Right lobe of liver (tissue), 6 donors: ENCODE measurements at regions of chr4 and their contacts with region 1.

Region 1: GRCh38 chr4:37889849-37890800 is 759 bp upstream of the TBC1D1 start:
- DNase-seq: peak; percentile 79 to 90 (median 82)
- ATAC-seq: peak; percentile 87 to 94 (median 90)
- H3K4me3 ChIP-seq: peak overlapping the region; percentile 78 to 91 (median 85)
- H3K27ac ChIP-seq: peak overlapping the region; percentile 80 to 90 (median 84)
- H3K4me1 ChIP-seq: peaks cover 0 to 12% (median 0%) of the 10 kb centered on the region in 4 donors
- H3K27me3 ChIP-seq: no peaks in the 10 kb centered on the region
- CTCF ChIP-seq: peak; percentile 31 to 53 (median 42)
- POLR2A ChIP-seq: no peak

Region 2: GRCh38 chr4:37434469-37434868 is 455.7 kb before region 1 on chr4:
- intact Hi-C with region 1: no loop called
- DNase-seq: no peak
- ATAC-seq: peak; percentile 29 to 48 (median 38)
- H3K4me3 ChIP-seq: no peak overlapping the region
- H3K27ac ChIP-seq: no peak overlapping the region
- H3K4me1 ChIP-seq: peaks cover 0 to 35% (median 7%) of the 10 kb centered on the region in 4 donors
- H3K27me3 ChIP-seq: no peaks in the 10 kb centered on the region
- CTCF ChIP-seq: peak in 3 of 4 donors; percentile 25 to 47 (median 36)
- POLR2A ChIP-seq: no peak

Region 3: GRCh38 chr4:37826295-37827029 is 63.7 kb before region 1 on chr4 and contains the start of gene PGM2:
- intact Hi-C with region 1: loop called in 1 of 2 experiments (anchors 10 kb)
- DNase-seq: peak; percentile 94 to 95 (median 94)
- ATAC-seq: peak; percentile 91 to 97 (median 92)
- H3K4me3 ChIP-seq: peak within 1 kb of the TSS; percentile 65 to 95 (median 79)
- H3K27ac ChIP-seq: peak within 1 kb of the TSS; percentile 77 to 88 (median 85)
- H3K4me1 ChIP-seq: peaks cover 0 to 34% (median 6%) of the 10 kb centered on the region in 4 donors
- H3K27me3 ChIP-seq: no peaks in the 10 kb centered on the region
- CTCF ChIP-seq: peak in 1 of 4 donors; percentile 12
- POLR2A ChIP-seq: peak; percentile 86
- total RNA-seq, gene PGM2: 5.5 to 16.3 (median 7.3) TPM

Region 4: GRCh38 chr4:37977471-37978247 is 87.5 kb after region 1 on chr4:
- intact Hi-C with region 1: loop called in 1 of 2 experiments (anchors 10 kb)
- DNase-seq: peak; percentile 80 to 88 (median 84)
- ATAC-seq: peak; percentile 71 to 84 (median 78)
- H3K4me3 ChIP-seq: peak overlapping the region; percentile 77 to 87 (median 78)
- H3K27ac ChIP-seq: peak overlapping the region; percentile 94 to 99 (median 95)
- H3K4me1 ChIP-seq: peaks cover 0 to 38% (median 5%) of the 10 kb centered on the region in 4 donors
- H3K27me3 ChIP-seq: no peaks in the 10 kb centered on the region
- CTCF ChIP-seq: peak; percentile 65 to 70 (median 68)
- POLR2A ChIP-seq: peak; percentile 42

Region 5: DNA sequence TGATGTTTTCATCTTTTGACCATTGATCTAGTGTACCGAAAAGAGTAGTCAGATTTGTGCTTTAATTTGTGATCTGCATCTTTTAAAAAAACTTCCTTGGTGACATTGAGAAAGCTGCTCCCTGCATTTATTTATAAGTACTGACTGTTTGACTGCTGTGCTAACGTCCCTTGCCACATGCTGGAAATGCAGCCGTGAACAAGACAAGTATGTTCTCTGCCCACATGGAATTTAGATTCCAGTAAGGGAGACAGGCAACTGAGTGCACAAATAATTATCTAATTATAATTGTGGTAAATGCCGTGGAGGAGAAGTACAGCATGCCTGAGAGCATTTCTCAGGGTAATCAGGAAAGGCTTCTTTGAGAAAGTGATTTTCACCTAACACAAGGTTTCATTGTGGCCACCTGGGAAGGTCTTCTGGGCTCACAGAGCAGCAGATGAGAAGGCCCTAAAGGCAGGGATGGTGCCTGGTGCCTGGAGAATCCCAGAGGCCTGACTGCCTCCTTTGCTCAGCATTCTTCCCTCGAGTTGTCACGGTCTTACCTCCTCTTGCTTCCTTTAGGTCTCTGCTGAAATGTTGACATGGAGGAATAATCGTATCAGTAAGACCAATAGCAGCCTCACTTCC is 125.9 kb after region 1 on chr4:
- intact Hi-C with region 1: no loop called
- DNase-seq: no peak
- ATAC-seq: no peak
- H3K4me3 ChIP-seq: no peak overlapping the region
- H3K27ac ChIP-seq: no peak overlapping the region
- H3K4me1 ChIP-seq: no peaks in the 10 kb centered on the region
- H3K27me3 ChIP-seq: no peaks in the 10 kb centered on the region
- CTCF ChIP-seq: no peak
- POLR2A ChIP-seq: no peak